Activated naive CD4-positive, alpha-beta T cell treated with anti-CD3 and anti-CD28 coated beads, Interleukin-2, amount 10 ng/mL, durations not matched to agents 7 days and 5 days (primary cell): ENCODE measurements at regions of chr2 and their contacts with region 1.

Region 1: DNA sequence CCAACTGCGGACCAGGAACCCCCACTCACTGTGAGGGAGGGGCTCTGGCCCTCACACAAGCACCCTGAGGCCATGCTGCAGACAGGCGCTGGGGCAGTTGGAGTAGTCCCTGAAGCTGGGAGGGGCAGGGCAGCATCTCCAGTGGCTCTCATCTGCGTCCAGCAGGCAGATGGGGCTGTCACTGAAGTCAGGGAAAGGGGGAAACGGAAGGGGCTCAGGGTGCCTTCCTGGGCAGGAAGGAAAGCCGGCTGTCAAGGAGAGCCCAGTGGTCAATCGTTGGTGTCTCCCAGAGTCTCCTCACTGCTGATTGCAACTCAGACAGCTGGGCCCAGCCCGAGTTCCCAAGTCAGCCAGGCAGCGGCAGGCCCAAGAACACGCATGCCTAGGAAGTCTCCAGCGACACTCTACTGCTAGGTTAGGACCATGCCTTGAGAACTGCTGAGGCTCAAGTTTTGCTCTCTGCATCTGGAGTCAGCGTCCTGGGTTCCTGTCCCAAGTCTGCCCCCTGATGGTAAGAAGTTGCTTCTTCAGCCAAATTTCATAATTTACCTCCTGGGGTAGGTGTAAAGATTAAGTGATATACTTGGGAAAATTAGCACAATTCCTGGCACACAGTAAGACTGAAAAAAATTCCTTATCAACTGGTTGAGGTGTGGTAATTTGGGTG is 27.5 kb upstream of the NMUR1 start:
- DNase-seq: peak; percentile 75
- H3K4me3 Mint-ChIP-seq: no peak overlapping the region
- H3K27ac Mint-ChIP-seq: no peak overlapping the region
- H3K4me1 Mint-ChIP-seq: peaks cover 31% of the 10 kb centered on the region
- H3K27me3 Mint-ChIP-seq: peaks cover 38% of the 10 kb centered on the region

Region 2: GRCh38 chr2:231482806-231483391 is 74.8 kb before region 1 on chr2:
- CTCF ChIA-PET with region 1: interaction called, 35 read pairs
- DNase-seq: peak; percentile 81
- H3K4me3 Mint-ChIP-seq: peak overlapping the region; percentile 77
- H3K27ac Mint-ChIP-seq: peak overlapping the region; percentile 92
- H3K4me1 Mint-ChIP-seq: peaks cover 29% of the 10 kb centered on the region
- H3K27me3 Mint-ChIP-seq: peaks cover 15% of the 10 kb centered on the region

Region 3: DNA sequence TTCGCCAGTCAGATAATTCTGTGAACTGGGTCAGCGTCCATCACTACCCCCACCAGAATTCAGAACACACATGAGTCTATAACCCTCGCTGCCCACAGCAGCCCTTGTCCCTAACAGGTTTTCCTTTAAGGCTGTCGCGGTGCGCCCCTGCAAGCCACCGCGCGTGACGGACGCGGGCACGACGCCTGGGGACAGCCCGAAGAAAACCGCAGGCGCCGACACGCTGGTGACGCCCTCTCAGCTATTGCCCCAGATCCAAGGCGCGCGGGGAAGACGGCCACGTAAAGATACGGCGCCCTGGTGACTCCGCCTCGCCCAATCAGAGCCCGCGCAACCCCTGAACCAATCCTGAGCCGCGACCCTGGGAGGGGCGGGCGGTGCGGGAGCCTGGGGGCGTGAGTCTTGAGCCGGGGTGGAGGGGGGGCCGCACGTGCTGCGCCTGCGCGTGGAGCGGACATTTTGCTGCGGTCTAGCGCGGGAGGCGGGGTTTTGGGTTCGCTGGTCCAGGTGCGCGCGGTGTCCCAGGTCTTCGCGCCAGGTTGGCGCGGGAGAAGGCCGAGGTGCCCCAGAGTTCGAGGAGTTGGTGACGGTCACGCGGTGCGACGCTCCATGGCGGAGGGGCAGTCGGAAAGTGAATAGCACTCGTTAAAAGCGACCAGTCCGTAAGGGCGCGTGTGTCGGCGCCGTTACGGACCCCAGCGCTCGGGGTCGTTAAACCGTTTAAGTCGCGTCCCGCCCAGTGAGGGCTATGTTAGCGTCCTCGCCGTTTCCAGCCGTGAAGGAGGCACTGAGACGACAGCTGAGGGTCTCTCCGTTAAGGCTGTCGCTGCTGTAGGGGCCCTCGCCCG is 43.4 kb before region 1 on chr2:
- CTCF ChIA-PET with region 1: interaction called, 51 read pairs
- DNase-seq: peak; percentile 99
- H3K4me3 Mint-ChIP-seq: peak overlapping the region; percentile 81
- H3K27ac Mint-ChIP-seq: peak overlapping the region; percentile 88
- H3K4me1 Mint-ChIP-seq: peaks cover 25% of the 10 kb centered on the region
- H3K27me3 Mint-ChIP-seq: peaks cover 23% of the 10 kb centered on the region

Region 4: GRCh38 chr2:231519975-231520555 is 37.6 kb before region 1 on chr2:
- CTCF ChIA-PET with region 1: interaction called, 51 read pairs
- DNase-seq: no peak
- H3K4me3 Mint-ChIP-seq: no peak overlapping the region
- H3K27ac Mint-ChIP-seq: no peak overlapping the region
- H3K4me1 Mint-ChIP-seq: peaks cover 43% of the 10 kb centered on the region
- H3K27me3 Mint-ChIP-seq: peaks cover 66% of the 10 kb centered on the region

Region 5: DNA sequence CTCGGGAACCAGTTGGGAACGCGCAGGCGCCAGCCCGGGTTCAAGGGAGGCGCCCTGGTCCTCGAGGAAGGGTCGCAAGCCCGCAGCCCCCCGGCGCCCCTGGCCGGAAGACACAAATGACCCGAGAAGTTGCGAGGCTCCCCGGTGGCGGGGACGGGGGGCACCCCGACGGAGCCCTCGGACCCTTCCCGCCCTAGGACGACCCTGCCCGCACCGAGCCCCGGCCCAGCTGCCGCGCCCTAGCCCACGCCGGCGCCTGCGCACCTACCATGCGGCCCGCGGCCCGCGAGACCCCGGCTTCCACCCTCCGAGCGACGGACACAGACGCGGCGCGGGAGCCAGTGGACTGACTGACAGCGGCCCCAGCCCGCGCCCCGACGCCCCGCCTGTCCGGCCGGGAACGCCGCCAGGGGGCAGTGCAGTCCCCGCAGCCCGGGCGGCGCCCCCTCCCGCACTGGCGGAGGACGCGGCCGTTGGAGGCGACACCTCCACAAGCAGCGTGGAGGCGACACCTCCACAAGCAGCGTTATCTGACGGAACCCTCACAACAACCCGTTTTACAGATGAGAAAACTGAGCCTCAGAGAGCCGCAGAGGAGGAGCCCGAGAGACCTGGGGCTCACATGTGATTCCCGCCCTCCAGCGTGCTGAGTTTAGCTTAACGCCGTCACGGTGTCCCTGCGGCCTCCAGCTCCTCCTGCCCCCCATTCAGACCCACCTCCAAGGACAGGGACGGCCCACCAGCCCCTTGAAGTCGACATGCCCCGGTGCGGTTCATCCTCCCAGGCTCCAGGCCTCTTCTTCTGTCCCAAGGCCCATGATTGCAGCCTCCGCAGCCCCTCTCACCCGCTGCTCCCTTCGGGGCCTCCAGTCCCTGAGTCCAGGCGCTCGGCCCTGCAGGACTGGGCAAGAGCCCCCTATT is 27.4 kb before region 1 on chr2 and contains the start of gene NMUR1:
- CTCF ChIA-PET with region 1: interaction called, 43 read pairs
- DNase-seq: peak; percentile 79
- H3K4me3 Mint-ChIP-seq: peak within 1 kb of the TSS; percentile 35
- H3K27ac Mint-ChIP-seq: peak within 1 kb of the TSS; percentile 26
- H3K4me1 Mint-ChIP-seq: peaks cover 17% of the 10 kb centered on the region
- H3K27me3 Mint-ChIP-seq: peaks cover 88% of the 10 kb centered on the region